ENCODE measurements at regions of chr9 and their contacts with region 1.

Region 1: DNA sequence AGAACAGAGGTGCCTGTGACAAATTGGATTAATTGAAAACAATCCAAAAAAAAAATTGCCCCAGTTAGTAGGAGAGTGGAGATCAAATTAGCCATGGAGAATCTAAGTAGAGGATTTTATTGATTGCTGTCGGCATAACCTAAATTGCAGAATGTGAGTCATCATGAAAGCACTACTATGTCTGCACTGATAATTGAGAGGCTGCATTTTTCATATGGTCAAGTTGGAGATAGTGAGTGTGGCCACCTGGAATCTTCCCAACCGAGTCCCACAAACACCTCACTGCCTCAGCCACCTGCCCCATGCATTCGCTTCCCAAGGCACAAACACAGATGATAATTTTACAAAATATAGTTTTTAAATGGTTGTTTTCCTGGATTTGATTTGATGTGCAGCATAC is 123.7 kb downstream of the NTRK2 start:
- DNase-seq: no peak
- ATAC-seq: no peak
- H3K4me3 ChIP-seq: no peak overlapping the region
- H3K4me1 ChIP-seq: no peaks in the 10 kb centered on the region
- CTCF ChIP-seq: no peak

Region 2: DNA sequence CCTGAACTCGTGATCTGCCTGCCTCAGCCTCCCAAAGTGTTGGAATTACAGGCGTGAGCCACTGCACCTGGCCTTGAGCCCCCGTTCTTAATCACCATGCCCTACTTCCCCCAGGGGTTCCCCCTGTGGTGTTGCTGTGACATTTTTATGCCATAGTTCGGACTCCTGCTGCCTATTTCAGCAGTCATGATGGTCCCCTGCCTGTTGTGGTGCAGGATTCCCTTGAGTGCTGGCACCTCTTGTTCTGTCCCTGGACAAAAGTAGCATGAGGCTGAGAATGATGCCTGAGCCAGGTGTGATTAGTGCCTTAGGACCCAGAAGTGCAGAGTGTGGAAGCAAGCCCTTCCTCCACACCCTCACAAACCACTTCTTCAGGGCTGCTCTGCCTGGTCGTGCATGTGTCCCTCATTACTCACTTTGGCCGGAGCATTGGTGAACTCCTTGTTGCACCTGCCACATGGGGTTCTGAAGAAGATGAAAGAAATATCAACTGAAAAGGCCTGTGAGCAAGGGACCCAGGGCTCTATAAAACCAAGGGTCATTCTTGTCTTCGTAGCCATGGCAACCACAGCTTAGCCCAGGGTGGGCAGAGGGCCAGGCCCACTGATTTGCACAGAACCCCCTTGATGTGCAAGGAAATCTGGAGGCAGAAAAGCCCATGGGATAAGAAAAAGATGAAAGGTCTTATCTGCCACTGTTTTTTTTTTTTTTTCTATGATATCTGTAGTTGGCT is 104.3 kb after region 1 on chr9:
- intact Hi-C with region 1: loop called in 1 of 2 experiments (anchors 10 kb)
- DNase-seq: no peak
- ATAC-seq: no peak
- H3K4me3 ChIP-seq: no peak overlapping the region
- H3K4me1 ChIP-seq: peaks cover 18% of the 10 kb centered on the region
- CTCF ChIP-seq: no peak